Activated CD4-positive, alpha-beta T cell treated with anti-CD3 and anti-CD28 coated beads for 36 hours (primary cell): ENCODE measurements at regions of chr6 and their contacts with region 1.

Region 1: DNA sequence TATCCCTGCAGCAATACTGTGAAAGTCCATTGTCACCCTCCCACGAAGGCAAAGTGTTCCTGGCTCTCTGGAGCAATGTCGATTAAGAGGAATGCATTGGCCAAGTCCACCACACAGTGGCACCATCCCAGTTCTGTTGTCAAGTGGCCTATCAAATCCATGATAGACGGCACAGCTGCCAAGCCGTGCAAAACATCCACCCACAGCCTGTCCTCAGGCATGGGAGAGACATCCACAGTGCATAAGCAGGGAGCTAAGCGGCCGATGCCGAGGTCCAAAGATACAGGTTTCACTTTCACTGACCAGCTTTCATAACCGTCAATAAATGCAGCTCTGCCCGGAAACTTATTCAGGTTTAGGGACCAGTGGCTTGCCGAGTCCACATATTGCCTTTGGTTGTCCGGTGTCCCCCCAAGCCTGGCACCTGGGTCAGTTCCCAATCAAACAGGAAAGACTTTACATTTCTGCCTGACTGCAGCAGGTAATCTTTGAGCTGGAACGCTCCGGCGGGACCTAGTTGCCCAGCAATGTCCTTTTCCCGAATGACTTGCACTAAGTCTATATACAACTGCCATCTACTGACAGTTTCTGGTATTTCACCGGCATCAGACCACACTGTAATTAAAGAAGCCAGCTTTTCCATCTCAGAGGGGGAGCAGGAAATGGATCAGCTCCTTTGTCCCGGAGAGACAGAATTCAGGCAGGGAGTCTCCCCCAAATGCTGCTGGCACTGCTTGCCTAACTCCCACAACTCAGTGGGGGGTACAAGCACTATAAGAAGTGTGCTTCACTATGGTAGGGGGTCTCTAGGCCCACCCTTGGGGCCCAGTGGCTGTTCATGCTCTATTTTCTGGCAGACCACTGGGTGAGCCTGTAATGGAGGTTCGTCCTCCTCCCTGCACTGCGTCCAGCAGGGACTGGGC is 6.3 kb downstream of the ZKSCAN3 start:
- DNase-seq: peak; percentile 71
- ATAC-seq: peak; percentile 85
- H3K4me3 Mint-ChIP-seq: peak overlapping the region; percentile 75
- H3K27ac Mint-ChIP-seq: peak overlapping the region; percentile 81
- H3K4me1 Mint-ChIP-seq: peaks cover 15% of the 10 kb centered on the region
- H3K27me3 Mint-ChIP-seq: no peaks in the 10 kb centered on the region

Region 2: DNA sequence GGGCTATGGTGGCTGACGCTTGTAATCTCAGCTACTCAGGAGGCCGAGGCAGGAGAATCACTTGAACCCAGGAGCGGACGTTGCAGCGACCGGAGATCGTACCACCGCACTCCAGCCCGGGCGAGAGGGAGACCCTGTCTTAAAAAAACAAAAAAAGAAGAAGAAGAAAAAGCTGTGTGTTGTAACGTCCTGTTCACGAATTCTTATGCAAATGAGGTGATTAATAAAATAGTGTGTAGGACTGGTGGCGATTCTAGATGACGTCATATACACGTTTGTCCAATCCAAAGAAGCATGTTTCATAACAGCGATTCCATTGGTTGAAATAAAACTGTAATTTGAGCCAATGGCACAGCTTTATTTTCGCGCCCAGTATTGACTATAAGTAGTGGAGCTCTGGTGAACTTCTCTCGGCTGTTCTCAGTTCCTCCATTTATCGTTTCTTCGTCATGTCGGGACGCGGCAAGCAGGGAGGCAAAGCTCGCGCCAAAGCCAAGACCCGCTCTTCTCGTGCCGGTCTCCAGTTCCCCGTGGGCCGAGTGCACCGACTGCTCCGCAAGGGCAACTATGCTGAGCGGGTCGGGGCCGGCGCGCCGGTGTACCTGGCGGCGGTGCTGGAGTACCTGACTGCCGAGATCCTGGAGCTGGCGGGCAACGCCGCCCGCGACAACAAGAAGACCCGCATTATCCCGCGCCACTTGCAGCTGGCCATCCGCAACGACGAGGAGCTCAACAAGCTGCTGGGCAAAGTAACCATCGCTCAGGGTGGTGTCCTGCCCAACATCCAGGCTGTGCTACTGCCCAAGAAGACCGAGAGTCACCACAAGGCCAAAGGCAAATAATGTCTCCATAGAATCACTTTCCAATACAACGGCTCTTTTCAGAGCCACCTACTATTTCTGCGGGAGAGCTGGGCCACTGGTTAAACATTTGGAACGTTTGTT is 490.8 kb before region 1 on chr6:
- CTCF ChIA-PET with region 1: no interaction called
- POLR2A ChIA-PET with region 1: no interaction called
- intact Hi-C with region 1: no loop called
- DNase-seq: peak; percentile 86
- ATAC-seq: peak; percentile 57
- H3K4me3 Mint-ChIP-seq: peak overlapping the region; percentile 94
- H3K27ac Mint-ChIP-seq: peak overlapping the region; percentile 99
- H3K4me1 Mint-ChIP-seq: peaks cover 40% of the 10 kb centered on the region
- H3K27me3 Mint-ChIP-seq: no peaks in the 10 kb centered on the region

Region 3: GRCh38 chr6:27902335-27903314 is 453.4 kb before region 1 on chr6:
- CTCF ChIA-PET with region 1: no interaction called
- POLR2A ChIA-PET with region 1: no interaction called
- intact Hi-C with region 1: loop called (anchors 1 to 2 kb)
- DNase-seq: peak; percentile 91
- ATAC-seq: peak; percentile 81
- H3K4me3 Mint-ChIP-seq: peak overlapping the region; percentile 74
- H3K27ac Mint-ChIP-seq: peak overlapping the region; percentile 89
- H3K4me1 Mint-ChIP-seq: peaks cover 5% of the 10 kb centered on the region
- H3K27me3 Mint-ChIP-seq: peaks cover 4% of the 10 kb centered on the region

Region 4: GRCh38 chr6:28124102-28124970 is 231.7 kb before region 1 on chr6 and contains the start of gene ZSCAN16:
- CTCF ChIA-PET with region 1: interaction called, 14 read pairs
- POLR2A ChIA-PET with region 1: no interaction called
- intact Hi-C with region 1: no loop called
- DNase-seq: peak; percentile 82
- ATAC-seq: peak; percentile 94
- H3K4me3 Mint-ChIP-seq: peak within 1 kb of the TSS; percentile 89
- H3K27ac Mint-ChIP-seq: peak within 1 kb of the TSS; percentile 91
- H3K4me1 Mint-ChIP-seq: peaks cover 43% of the 10 kb centered on the region
- H3K27me3 Mint-ChIP-seq: no peaks in the 10 kb centered on the region
- total RNA-seq, gene ZSCAN16: 2.1 to 2.6 TPM

Region 5: DNA sequence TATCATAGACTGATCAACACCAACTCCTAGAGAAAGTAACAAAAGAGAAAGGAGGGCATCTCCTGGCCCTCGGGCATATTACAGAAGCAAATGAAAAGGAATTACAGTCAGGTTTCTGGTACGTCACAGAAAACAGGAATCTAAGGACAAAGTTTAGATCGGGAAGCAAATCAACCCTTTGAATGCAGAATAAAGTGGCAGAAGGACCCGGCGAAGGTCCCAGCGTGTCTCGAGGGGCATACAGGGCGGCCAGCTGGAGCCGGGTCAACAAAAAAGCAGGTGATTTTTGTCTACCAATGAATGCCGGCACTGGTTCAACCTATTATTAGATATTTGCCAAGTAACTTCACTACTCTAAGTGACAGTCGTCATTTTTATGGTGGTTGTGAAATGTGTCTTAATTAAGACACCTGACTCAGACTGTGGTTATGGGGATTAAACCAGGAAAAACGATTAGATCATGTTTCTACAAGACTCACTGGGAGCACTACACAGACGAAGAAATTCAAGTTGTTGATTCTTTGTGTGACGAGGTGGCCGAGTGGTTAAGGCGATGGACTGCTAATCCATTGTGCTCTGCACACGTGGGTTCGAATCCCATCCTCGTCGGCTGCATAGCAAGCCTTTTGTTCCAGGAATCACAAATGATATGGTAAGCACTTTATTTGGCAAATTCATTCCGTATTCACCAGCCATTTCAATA is 143.3 kb before region 1 on chr6:
- CTCF ChIA-PET with region 1: interaction called, 3 read pairs
- POLR2A ChIA-PET with region 1: no interaction called
- intact Hi-C with region 1: loop called in 1 of 2 experiments (anchors 5 kb)
- DNase-seq: peak; percentile 80
- ATAC-seq: peak; percentile 71
- H3K4me3 Mint-ChIP-seq: peak overlapping the region; percentile 64
- H3K27ac Mint-ChIP-seq: peak overlapping the region; percentile 33
- H3K4me1 Mint-ChIP-seq: peaks cover 22% of the 10 kb centered on the region
- H3K27me3 Mint-ChIP-seq: peaks cover 71% of the 10 kb centered on the region

Region 6: GRCh38 chr6:28648035-28648877 is 292.3 kb after region 1 on chr6:
- CTCF ChIA-PET with region 1: no interaction called
- POLR2A ChIA-PET with region 1: no interaction called
- intact Hi-C with region 1: no loop called
- DNase-seq: peak; percentile 83
- ATAC-seq: peak; percentile 74
- H3K4me3 Mint-ChIP-seq: peak overlapping the region; percentile 78
- H3K27ac Mint-ChIP-seq: peak overlapping the region; percentile 26
- H3K4me1 Mint-ChIP-seq: peaks cover 7% of the 10 kb centered on the region
- H3K27me3 Mint-ChIP-seq: peaks cover 50% of the 10 kb centered on the region